ENCODE measurements at regions of chr19 and their contacts with region 1.

Region 1: GRCh38 chr19:55088543-55089341 is 13.1 kb downstream of the EPS8L1 start:
- DNase-seq: peak; percentile 35 to 86
- H3K4me3 ChIP-seq: no peak overlapping the region
- H3K27ac ChIP-seq: peak overlapping the region; percentile 18; the same call in 1 of the 2 replicates
- H3K4me1 ChIP-seq: no peaks in the 10 kb centered on the region
- H3K27me3 ChIP-seq: no peaks in the 10 kb centered on the region
- CTCF ChIP-seq: peak; percentile 86

Region 2: DNA sequence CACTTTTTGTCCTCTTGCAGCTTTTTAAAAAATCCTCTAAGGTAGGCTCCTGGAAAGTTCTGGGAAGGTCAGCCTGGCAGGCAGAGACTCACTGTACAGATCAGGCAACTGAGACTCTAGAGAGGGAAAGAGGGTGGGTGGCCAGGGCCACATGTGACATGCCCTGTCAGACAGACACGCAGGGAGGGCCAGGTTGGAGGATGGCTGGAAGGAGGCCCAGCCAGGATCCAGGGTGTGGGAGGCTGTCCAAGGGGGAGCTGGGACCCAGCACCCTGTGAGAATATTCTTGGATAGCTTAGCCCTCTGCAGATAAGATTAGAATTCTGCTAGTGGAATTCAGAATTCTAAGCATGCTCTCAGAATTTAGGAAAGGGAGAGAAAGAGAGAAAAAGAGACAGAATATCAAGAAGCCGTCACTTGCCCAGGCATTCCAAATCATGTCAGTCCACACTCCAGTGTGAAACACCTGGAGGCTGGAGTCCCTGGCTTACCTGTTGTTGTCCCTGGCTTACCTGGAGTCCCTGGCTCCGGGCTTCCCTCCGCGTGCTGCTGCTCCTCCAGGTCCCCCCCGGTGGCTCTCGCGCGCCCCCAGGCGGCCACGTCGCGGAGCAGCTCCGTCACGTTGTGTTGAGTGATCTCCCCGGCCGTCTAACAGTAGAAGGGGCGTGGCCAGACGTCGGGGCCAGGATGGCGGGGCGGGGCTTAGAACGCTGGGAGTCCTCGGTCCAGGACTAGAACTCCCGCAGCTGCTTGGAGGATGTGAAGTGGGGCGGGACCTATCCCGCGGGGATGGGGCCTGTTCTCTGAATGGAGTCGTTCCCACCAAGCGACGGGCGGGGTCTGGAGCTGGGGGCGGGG is 71.6 kb after region 1 on chr19:
- CTCF ChIA-PET with region 1: interaction called, 8 read pairs
- POLR2A ChIA-PET with region 1: interaction called, 4 read pairs
- intact Hi-C with region 1: loop called (anchors 1 kb)
- DNase-seq: peak; percentile 89 to 98
- H3K4me3 ChIP-seq: no peak overlapping the region
- H3K27ac ChIP-seq: no peak overlapping the region
- H3K4me1 ChIP-seq: peaks cover 21% of the 10 kb centered on the region
- H3K27me3 ChIP-seq: no peaks in the 10 kb centered on the region
- CTCF ChIP-seq: peak; percentile 98